A673 (cell line): ENCODE measurements at regions of chr14 and their contacts with region 1.

Region 1: GRCh38 chr14:83300476-83301064 is 1766.9 kb upstream of the SEL1L start:
- DNase-seq: peak; percentile 80
- H3K4me3 ChIP-seq: no peak overlapping the region
- H3K27ac ChIP-seq: peak overlapping the region; percentile 50
- H3K4me1 ChIP-seq: peaks cover 42% of the 10 kb centered on the region
- H3K27me3 ChIP-seq: no peaks in the 10 kb centered on the region
- CTCF ChIP-seq: peak; percentile 88

Region 2: DNA sequence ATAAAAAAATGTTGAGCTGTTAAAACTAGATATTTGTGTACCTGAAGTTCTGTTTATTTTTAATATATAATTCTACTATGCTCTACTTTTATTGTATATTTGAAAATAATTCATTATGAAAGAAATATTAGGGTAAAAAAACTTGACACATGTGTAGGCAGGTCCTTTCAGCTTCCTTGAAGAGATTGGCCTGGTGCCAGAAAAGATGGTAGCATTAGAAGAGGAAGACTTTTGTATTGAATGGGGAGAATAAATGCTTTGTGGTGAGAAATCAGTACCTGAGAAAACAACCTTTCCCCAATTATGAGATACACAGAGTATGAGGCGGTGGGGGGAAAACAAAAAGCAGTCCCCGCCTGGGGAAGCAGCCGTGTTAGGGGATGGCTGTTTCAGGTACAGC is 274.6 kb before region 1 on chr14:
- CTCF ChIA-PET with region 1: no interaction called
- POLR2A ChIA-PET with region 1: no interaction called
- intact Hi-C with region 1: no loop called
- DNase-seq: peak; percentile 8
- H3K4me3 ChIP-seq: no peak overlapping the region
- H3K27ac ChIP-seq: no peak overlapping the region
- H3K4me1 ChIP-seq: no peaks in the 10 kb centered on the region
- H3K27me3 ChIP-seq: no peaks in the 10 kb centered on the region
- CTCF ChIP-seq: no peak

Region 3: GRCh38 chr14:83331513-83331912 is 30.9 kb after region 1 on chr14:
- CTCF ChIA-PET with region 1: interaction called, 15 read pairs
- POLR2A ChIA-PET with region 1: no interaction called
- intact Hi-C with region 1: no loop called
- DNase-seq: no peak
- H3K4me3 ChIP-seq: no peak overlapping the region
- H3K27ac ChIP-seq: no peak overlapping the region
- H3K4me1 ChIP-seq: no peaks in the 10 kb centered on the region
- H3K27me3 ChIP-seq: no peaks in the 10 kb centered on the region
- CTCF ChIP-seq: no peak

Region 4: GRCh38 chr14:84814391-84814790 is 1513.8 kb after region 1 on chr14:
- CTCF ChIA-PET with region 1: no interaction called
- POLR2A ChIA-PET with region 1: interaction called, 6 read pairs
- intact Hi-C with region 1: loop called (anchors 1 kb)
- DNase-seq: peak; percentile 85
- H3K4me3 ChIP-seq: no peak overlapping the region
- H3K27ac ChIP-seq: peak overlapping the region; percentile 92
- H3K4me1 ChIP-seq: peaks cover 7% of the 10 kb centered on the region
- H3K27me3 ChIP-seq: no peaks in the 10 kb centered on the region
- CTCF ChIP-seq: no peak